ENCODE measurements at regions of chr1 and their contacts with region 1.

Region 1: GRCh38 chr1:176177764-176178163 is 29.3 kb downstream of the COP1 start:
- DNase-seq: no peak
- ATAC-seq: peak; percentile 94
- H3K4me3 Mint-ChIP-seq: peak overlapping the region; percentile 27
- H3K27ac Mint-ChIP-seq: peak overlapping the region; percentile 89
- H3K4me1 Mint-ChIP-seq: peaks cover 38% of the 10 kb centered on the region
- H3K27me3 Mint-ChIP-seq: no peaks in the 10 kb centered on the region

Region 2: DNA sequence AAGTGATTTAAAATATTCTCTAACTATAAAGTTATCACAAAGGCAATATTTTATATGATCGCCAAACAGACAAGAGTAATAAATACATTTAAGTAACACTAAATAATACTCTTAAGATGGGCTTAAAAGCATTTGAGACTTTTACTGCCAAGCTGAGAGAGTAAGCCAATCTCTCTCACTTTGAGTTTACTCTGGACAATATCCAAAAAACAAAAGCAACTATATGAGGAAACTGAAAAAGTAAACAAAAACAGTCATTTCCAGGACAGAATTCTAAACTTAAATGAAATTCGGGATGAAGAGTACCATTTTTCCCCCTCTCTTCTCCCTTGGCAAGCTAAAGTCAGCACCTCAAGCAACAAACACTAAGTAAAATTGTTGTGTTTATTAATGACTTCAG is 143.9 kb before region 1 on chr1:
- CTCF ChIA-PET with region 1: no interaction called
- POLR2A ChIA-PET with region 1: no interaction called
- intact Hi-C with region 1: loop called in 1 of 2 experiments (anchors 5 kb)
- DNase-seq: no peak
- ATAC-seq: no peak
- H3K4me3 Mint-ChIP-seq: no peak overlapping the region
- H3K27ac Mint-ChIP-seq: no peak overlapping the region
- H3K4me1 Mint-ChIP-seq: peaks cover 1% of the 10 kb centered on the region
- H3K27me3 Mint-ChIP-seq: no peaks in the 10 kb centered on the region

Region 3: DNA sequence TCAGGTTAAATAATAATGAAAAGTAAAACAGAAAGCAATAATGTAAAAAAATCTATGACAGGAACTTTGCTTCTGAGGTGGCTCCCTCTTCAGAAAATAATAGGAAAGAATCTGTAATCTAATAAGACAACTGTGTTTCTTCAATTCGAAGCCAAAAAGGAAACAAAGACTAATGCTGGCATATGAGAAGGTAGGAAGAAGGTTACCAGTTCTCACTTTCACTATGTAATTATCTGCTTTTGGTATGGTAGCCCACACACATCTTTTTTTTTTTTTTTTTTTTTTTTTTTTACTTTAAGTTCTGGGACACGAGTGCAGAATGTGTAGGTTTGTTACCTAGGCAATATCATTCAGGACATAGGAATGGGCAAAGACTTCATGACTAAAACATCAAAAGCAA is 17.8 kb before region 1 on chr1:
- CTCF ChIA-PET with region 1: interaction called, 3 read pairs
- POLR2A ChIA-PET with region 1: interaction called, 6 read pairs
- intact Hi-C with region 1: loop called (anchors 1 kb)
- DNase-seq: no peak
- ATAC-seq: peak; percentile 70
- H3K4me3 Mint-ChIP-seq: peak overlapping the region; percentile 29
- H3K27ac Mint-ChIP-seq: peak overlapping the region; percentile 79
- H3K4me1 Mint-ChIP-seq: peaks cover 46% of the 10 kb centered on the region
- H3K27me3 Mint-ChIP-seq: no peaks in the 10 kb centered on the region

Region 4: GRCh38 chr1:176193023-176193422 is 15.3 kb after region 1 on chr1:
- CTCF ChIA-PET with region 1: no interaction called
- POLR2A ChIA-PET with region 1: no interaction called
- intact Hi-C with region 1: loop called in 1 of 2 experiments (anchors 2 kb)
- DNase-seq: no peak
- ATAC-seq: peak; percentile 61
- H3K4me3 Mint-ChIP-seq: no peak overlapping the region
- H3K27ac Mint-ChIP-seq: no peak overlapping the region
- H3K4me1 Mint-ChIP-seq: peaks cover 79% of the 10 kb centered on the region
- H3K27me3 Mint-ChIP-seq: no peaks in the 10 kb centered on the region

Region 5: GRCh38 chr1:176206961-176207902 is 29.5 kb after region 1 on chr1 and contains the start of gene COP1:
- CTCF ChIA-PET with region 1: no interaction called
- POLR2A ChIA-PET with region 1: interaction called, 3 read pairs
- intact Hi-C with region 1: loop called (anchors 1 kb)
- DNase-seq: peak; percentile 97
- ATAC-seq: peak; percentile 82
- H3K4me3 Mint-ChIP-seq: peak within 1 kb of the TSS; percentile 98
- H3K27ac Mint-ChIP-seq: peak within 1 kb of the TSS; percentile 100
- H3K4me1 Mint-ChIP-seq: peaks cover 28% of the 10 kb centered on the region
- H3K27me3 Mint-ChIP-seq: no peaks in the 10 kb centered on the region
- total RNA-seq, gene COP1: 38.7 to 43.4 TPM

Region 6: DNA sequence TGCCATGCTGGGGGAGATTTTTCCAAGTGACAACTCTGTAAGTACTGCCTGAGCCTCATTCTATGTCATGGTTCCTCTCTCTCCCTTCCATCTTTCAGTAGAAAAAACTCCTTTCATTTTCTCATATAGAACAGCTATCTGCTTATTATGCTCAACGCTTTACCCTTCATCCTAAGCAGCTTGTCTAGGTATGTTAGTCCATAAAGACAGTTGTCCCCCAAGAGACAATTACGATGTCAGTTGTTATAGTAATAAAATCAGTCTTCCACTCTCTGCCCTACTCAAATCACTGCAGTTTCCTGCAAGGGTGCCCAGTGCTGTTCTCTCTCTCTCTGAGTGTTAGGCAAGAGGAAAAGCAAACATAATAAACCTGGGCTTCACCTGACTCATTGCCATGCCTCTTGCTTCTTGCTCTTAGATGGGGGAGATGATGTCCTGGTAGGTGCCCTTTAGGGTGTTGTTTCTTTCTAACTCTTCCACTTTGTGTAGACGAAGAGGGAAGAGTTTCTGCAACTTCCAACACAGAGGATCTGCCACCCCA is 344.6 kb after region 1 on chr1:
- CTCF ChIA-PET with region 1: no interaction called
- POLR2A ChIA-PET with region 1: no interaction called
- intact Hi-C with region 1: no loop called
- DNase-seq: no peak
- ATAC-seq: no peak
- H3K4me3 Mint-ChIP-seq: no peak overlapping the region
- H3K27ac Mint-ChIP-seq: no peak overlapping the region
- H3K4me1 Mint-ChIP-seq: no peaks in the 10 kb centered on the region
- H3K27me3 Mint-ChIP-seq: no peaks in the 10 kb centered on the region

Measured in activated CD4-positive, alpha-beta T cell treated with anti-CD3 and anti-CD28 coated beads for 36 hours (primary cell).